A549 (cell line): ENCODE measurements at regions of chr7 and their contacts with region 1.

Region 1: DNA sequence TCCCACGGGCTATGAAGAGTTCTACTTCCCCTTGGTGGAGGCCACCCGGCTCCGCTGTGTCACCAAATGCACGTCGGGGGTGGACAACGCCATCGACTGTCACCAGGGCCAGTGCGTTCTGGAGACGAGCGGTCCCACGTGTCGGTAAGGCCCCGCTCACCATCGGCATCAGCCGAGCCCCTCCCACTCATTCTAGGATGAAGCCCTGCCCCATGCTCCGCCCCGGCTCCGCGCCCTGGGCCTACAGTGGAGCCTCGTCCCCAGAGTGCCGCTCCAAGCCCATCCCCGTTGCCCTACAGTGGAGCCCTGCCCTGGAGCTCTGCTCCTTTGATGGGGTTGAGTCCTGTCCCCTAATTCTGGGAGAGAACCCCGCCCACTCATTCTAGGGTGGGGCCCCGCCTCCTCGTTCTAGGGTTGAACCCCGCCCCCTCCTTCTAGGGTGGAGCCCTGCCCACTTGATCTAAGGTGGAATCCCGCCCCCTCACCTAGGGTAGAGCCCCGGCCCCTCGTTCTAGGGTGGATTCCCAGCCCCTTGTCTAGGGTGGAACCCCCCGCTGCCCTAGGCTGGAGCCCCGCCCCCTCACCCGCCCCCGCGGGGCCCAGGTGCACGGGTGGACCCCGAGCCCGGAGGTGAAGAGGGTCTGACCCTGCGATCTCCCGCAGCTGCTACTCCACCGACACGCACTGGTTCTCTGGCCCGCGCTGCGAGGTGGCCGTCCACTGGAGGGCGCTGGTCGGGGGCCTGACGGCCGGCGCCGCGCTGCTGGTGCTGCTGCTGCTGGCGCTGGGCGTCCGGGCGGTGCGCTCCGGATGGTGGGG is 3.4 kb upstream of the MUC12 start:
- DNase-seq: peak; percentile 88 to 98
- ATAC-seq: peak; percentile 85 to 93
- H3K4me3 ChIP-seq: peak overlapping the region; percentile 48
- H3K27ac ChIP-seq: peak overlapping the region; percentile 48 to 74; a peak in 5 of 6 replicates
- H3K4me1 ChIP-seq: peaks cover 24% of the 10 kb centered on the region; the same call in 2 of the 3 replicates
- CTCF ChIP-seq: peak; percentile 99
- EP300 ChIP-seq: no peak
- POLR2A ChIP-seq: no peak
- RAD21 ChIP-seq: peak; percentile 74 to 87

Region 2: GRCh38 chr7:100991631-100992030 is 25.7 kb after region 1 on chr7:
- CTCF ChIA-PET with region 1: interaction called, 10 read pairs
- POLR2A ChIA-PET with region 1: no interaction called
- DNase-seq: no peak
- ATAC-seq: no peak
- H3K4me3 ChIP-seq: no peak overlapping the region
- H3K27ac ChIP-seq: no peak overlapping the region
- H3K4me1 ChIP-seq: no peaks in the 10 kb centered on the region
- CTCF ChIP-seq: no peak
- EP300 ChIP-seq: no peak
- POLR2A ChIP-seq: no peak
- RAD21 ChIP-seq: no peak

Region 3: DNA sequence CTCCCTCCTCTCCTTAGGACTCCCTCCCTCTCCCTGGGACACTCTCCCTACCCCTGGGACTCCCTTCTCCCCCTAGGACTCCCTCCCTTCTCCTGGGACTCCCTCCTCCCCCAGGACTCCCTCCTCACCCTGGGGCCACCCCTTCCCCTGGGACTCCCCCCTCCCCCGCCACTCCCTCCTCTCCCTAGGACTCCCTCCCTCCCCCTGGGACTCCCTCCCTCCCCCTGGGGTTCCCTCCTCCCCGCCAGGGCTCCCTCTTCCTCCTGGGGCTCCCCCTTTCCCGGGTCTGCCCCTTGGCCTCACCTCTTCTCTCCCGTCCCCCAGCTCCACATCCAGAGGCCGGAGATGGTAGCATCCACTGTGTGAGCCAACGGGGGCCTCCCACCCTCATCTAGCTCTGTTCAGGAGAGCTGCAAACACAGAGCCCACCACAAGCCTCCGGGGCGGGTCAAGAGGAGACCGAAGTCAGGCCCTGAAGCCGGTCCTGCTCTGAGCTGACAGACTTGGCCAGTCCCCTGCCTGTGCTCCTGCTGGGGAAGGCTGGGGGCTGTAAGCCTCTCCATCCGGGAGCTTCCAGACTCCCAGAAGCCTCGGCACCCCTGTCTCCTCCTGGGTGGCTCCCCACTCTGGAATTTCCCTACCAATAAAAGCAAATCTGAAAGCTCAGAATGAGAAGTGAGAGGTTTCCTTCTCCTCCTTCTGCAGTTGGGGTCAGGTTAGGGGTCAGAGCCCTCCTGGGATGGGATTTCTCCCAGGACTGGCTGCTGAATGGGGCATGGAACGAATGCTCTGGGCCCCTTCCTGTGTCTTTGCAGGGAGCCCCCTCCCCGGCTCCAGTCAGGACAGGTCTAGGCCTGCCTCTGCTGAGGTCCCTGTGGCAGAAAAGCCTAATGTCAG is 52.6 kb after region 1 on chr7:
- CTCF ChIA-PET with region 1: interaction called, 13 read pairs
- POLR2A ChIA-PET with region 1: interaction called, 3 read pairs
- DNase-seq: peak in 1 of 2 experiments; percentile 18
- ATAC-seq: peak in 1 of 2 experiments; percentile 8; a peak in 3 of 6 replicates
- H3K4me3 ChIP-seq: no peak overlapping the region
- H3K27ac ChIP-seq: peak overlapping the region; percentile 62 to 84
- H3K4me1 ChIP-seq: peaks cover 23% of the 10 kb centered on the region
- CTCF ChIP-seq: no peak
- EP300 ChIP-seq: no peak
- POLR2A ChIP-seq: no peak
- RAD21 ChIP-seq: no peak

Region 4: GRCh38 chr7:101066141-101066832 is 100.4 kb after region 1 on chr7:
- CTCF ChIA-PET with region 1: interaction called, 12 read pairs
- POLR2A ChIA-PET with region 1: no interaction called
- DNase-seq: no peak
- ATAC-seq: no peak
- H3K4me3 ChIP-seq: no peak overlapping the region
- H3K27ac ChIP-seq: no peak overlapping the region
- H3K4me1 ChIP-seq: no peaks in the 10 kb centered on the region
- CTCF ChIP-seq: no peak
- EP300 ChIP-seq: no peak
- POLR2A ChIP-seq: no peak
- RAD21 ChIP-seq: no peak

Region 5: GRCh38 chr7:101094416-101095375 is 128.8 kb after region 1 on chr7:
- CTCF ChIA-PET with region 1: no interaction called
- POLR2A ChIA-PET with region 1: no interaction called
- DNase-seq: peak; percentile 60 to 79
- ATAC-seq: peak; percentile 83 to 85
- H3K4me3 ChIP-seq: no peak overlapping the region
- H3K27ac ChIP-seq: peak overlapping the region; percentile 50 to 94
- H3K4me1 ChIP-seq: peaks cover 35% of the 10 kb centered on the region
- CTCF ChIP-seq: peak; percentile 84
- EP300 ChIP-seq: no peak
- POLR2A ChIP-seq: no peak
- RAD21 ChIP-seq: peak; percentile 82 to 86

Region 6: GRCh38 chr7:101602484-101603241 is 636.7 kb after region 1 on chr7:
- CTCF ChIA-PET with region 1: no interaction called
- POLR2A ChIA-PET with region 1: no interaction called
- DNase-seq: peak; percentile 72 to 78
- ATAC-seq: peak; percentile 95 to 99
- H3K4me3 ChIP-seq: no peak overlapping the region
- H3K27ac ChIP-seq: peak overlapping the region; percentile 57 to 81; a peak in 4 of 6 replicates
- H3K4me1 ChIP-seq: peaks cover 6% of the 10 kb centered on the region
- CTCF ChIP-seq: peak; percentile 95
- EP300 ChIP-seq: no peak
- POLR2A ChIP-seq: no peak
- RAD21 ChIP-seq: peak; percentile 94 to 95